Posterior vena cava (tissue), 2 donors: ENCODE measurements at regions of chr11 and their contacts with region 1.

Region 1: GRCh38 chr11:121814962-121815361 is 301.1 kb downstream of the BLID start:
- DNase-seq: no peak

Region 2: GRCh38 chr11:121790430-121790829 is 24.5 kb before region 1 on chr11:
- intact Hi-C with region 1: loop called in 1 of 2 experiments (anchors 2 kb)
- DNase-seq: no peak

Region 3: DNA sequence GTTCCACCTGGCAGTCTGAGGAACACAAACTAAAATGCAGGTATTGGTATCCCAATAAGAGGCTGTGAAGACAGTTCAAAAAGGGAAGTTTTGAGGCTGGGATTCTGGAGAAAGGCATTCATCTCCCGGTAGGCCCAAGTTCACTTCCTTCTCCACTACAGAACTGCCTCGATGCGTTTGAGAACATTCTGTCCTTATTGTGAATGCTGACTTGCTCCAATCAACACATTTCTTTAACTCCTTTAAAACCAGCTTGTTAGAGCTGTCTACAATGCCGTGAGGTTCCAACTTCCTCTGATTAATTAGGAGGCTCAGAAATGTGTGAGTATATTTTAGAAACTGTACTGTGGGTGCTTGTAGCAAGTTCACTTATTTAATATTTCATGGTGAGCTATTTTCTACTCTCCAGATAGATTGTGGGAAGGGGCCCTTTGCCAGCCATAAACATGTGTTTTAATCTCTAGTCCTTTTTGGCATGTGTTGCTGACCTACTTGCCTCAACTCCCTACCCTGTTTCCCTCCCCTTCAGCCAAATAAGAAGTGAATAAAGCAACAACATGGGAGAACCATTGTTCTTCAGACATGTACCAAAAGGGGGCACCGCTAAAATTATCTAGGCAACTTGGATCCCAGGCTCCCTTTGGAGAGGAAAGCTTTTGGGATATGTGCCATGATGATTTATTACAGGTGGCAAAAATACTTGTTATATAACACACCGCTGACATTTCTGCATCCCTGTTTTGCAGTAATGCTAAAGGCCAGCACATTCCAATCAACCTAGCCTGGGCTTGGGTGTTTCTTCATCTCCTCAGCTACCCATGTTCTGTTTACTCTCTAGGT is 55.5 kb after region 1 on chr11:
- intact Hi-C with region 1: no loop called
- DNase-seq: no peak

Region 4: DNA sequence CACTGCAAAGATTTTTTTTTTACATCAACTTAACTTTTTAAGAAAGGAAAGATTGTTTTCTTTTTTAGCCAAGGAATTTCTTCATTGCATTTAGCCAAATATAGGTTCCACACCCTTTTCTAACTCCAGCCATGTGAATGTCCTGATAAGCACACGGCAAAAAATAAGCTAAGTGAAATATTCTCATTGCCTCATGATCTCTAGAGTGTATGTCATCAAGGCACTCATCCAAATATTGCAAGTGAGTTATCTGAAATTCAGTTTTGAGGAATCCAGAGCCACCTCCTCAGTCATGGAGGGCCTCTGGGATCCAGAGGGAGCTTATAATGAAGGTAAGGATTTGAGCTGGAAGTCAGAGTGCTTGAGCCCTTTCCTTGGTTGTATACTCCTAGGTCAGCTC is 221.1 kb after region 1 on chr11:
- intact Hi-C with region 1: no loop called
- DNase-seq: no peak

Region 5: GRCh38 chr11:122976734-122977469 is 1161.9 kb after region 1 on chr11:
- intact Hi-C with region 1: no loop called
- DNase-seq: no peak